AG04450 (cell line): ENCODE measurements at regions of chr9 and their contacts with region 1.

Region 1: DNA sequence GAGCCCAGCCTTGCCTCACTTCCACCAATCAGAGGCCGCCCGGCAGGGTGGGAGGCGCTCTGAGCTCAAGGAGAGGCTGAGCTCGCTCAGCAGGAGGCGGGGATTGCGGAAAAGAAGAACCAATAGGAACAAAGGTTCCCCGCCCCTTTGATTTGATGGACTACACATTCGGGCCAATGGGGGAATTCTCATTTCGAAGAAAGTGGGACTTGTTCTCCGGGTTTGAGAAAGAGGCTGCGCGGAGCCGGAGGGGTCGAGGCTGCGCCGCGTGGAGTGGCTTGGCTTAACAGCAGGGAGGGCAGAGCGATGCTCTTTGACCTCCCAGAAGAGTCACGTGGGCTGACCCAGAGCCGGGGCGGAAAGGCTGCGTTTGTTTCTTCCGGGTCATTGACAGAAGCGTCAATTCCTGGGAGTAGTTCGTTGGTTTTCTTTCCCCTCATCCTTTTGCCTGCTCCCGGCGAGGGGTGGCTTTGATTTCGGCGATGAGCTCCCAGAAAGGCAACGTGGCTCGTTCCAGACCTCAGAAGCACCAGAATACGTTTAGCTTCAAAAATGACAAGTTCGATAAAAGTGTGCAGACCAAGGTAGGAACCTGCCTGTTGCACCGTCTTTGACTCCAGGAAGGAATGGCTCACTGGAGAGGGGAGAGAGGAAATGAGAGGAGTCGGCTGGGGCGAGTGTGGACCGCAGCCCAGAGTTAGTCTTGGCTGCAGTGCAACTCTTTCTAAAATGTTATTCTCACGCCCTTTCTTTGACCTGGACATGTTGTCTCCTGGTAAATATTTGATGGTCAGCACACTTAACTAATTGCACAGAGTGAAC is at the start of gene C9orf85:
- DNase-seq: peak; percentile 98
- H3K4me3 ChIP-seq: peak within 1 kb of the TSS; percentile 89
- H3K27ac ChIP-seq: peak within 1 kb of the TSS; percentile 84
- H3K27me3 ChIP-seq: no peaks in the 10 kb centered on the region
- CTCF ChIP-seq: no peak
- polyA plus RNA-seq, gene C9orf85: 15.1 and 19.8 TPM in 2 replicates

Region 2: DNA sequence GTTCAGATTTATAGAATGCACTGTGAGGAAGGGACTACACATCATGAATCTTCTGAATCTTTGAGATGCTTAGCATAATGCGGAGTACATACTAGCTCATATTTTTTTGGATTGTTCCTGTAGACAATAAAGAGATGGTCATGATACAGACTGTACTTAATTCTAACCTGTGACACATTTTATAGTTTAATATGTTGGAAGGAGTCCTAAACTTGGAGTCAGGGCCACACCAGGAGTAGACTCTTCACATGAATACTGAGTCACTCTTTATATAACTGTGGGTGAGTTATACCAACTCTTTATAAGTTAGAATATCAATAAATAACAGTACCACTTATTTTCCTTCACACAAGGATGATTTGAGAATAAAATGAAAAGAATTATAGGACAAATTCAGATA is 16.9 kb after region 1 on chr9:
- CTCF ChIA-PET with region 1: no interaction called
- POLR2A ChIA-PET with region 1: interaction called, 17 read pairs
- DNase-seq: no peak
- H3K4me3 ChIP-seq: no peak overlapping the region
- H3K27ac ChIP-seq: no peak overlapping the region
- H3K27me3 ChIP-seq: no peaks in the 10 kb centered on the region
- CTCF ChIP-seq: no peak